H1 (cell line): ENCODE measurements at regions of chr10 and their contacts with region 1.

Region 1: GRCh38 chr10:31770307-31770902 is 158.2 kb downstream of the ARHGAP12 start:
- DNase-seq: no peak
- H3K4me3 ChIP-seq: no peak overlapping the region
- H3K27ac ChIP-seq: no peak overlapping the region
- H3K4me1 ChIP-seq: peaks cover 3 to 8% (median 4%) of the 10 kb centered on the region in 4 experiments; a peak in 5 of 7 replicates
- H3K27me3 ChIP-seq: no peaks in the 10 kb centered on the region; a peak in 1 of 7 replicates
- CTCF ChIP-seq: peak; percentile 56 to 88 (median 66)
- EP300 ChIP-seq: no peak
- POLR2A ChIP-seq: no peak
- RAD21 ChIP-seq: peak; percentile 72 to 80

Region 2: GRCh38 chr10:31739711-31740110 is 30.7 kb before region 1 on chr10:
- CTCF ChIA-PET with region 1: interaction called, 18 read pairs
- POLR2A ChIA-PET with region 1: no interaction called
- DNase-seq: no peak
- H3K4me3 ChIP-seq: no peak overlapping the region
- H3K27ac ChIP-seq: no peak overlapping the region
- H3K4me1 ChIP-seq: no peaks in the 10 kb centered on the region
- H3K27me3 ChIP-seq: no peaks in the 10 kb centered on the region
- CTCF ChIP-seq: no peak
- EP300 ChIP-seq: no peak
- POLR2A ChIP-seq: no peak
- RAD21 ChIP-seq: no peak

Region 3: DNA sequence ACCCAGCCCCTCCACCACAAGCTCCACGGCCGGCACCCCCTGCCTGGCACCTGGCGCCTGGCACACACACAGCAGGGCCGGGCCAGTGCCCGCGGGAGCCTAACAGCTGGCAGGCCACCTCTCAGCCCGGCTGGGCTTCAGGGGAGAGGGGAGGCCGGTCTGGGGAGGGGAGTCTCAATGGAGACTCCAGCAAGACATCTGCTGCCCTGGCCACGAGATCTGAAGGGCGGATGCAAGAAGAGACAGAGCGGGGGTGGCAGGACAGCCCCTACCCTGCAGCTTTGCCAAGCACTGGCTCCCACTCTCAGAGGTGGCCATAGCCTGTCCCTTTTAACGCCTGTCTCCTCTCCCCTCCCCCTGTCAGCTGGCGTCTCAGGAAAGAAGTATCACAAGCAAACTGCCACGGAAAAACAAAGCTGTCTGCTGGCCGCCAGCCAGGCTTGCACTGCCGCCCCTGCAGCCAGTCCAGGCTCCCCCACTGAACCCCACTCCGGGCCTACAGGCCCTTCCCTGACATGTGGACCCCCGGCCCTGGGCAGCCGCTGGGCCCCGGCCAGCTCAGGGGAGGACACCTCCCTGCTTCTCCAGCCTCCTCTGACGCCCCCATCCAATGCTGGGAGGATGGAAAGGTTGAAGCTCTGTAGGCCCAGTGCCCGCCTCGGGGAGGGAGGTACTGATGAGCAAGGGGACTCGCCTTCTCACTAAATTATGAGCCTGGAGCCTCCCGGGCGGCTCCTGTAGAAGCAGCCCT is 20.2 kb before region 1 on chr10:
- CTCF ChIA-PET with region 1: interaction called, 18 read pairs
- POLR2A ChIA-PET with region 1: interaction called, 3 read pairs
- DNase-seq: no peak
- H3K4me3 ChIP-seq: no peak overlapping the region
- H3K27ac ChIP-seq: no peak overlapping the region
- H3K4me1 ChIP-seq: peaks cover 4 to 8% (median 7%) of the 10 kb centered on the region in 4 experiments
- H3K27me3 ChIP-seq: no peaks in the 10 kb centered on the region
- CTCF ChIP-seq: no peak
- EP300 ChIP-seq: no peak
- POLR2A ChIP-seq: no peak
- RAD21 ChIP-seq: no peak

Region 4: DNA sequence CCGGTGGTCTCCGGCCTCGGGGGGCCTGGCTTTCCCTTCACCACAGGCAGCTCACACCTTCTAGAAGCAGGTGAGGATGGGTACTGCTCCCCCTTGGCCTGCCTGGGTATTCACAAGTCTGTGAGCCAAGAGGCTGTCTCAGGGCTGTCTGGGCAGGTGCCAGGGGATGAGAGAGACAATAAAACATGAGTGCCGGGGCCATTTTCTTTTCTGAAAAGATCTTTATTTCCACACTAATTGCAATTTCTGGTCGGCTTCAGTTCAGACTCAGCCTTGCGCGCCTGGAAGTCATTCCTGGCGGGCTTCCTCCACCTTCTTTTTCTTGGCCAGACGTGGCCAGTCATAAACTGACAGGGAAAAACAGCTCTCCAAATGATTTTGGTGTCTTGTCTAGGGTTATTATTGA is 13.0 kb before region 1 on chr10:
- CTCF ChIA-PET with region 1: interaction called, 18 read pairs
- POLR2A ChIA-PET with region 1: interaction called, 6 read pairs
- DNase-seq: no peak
- H3K4me3 ChIP-seq: no peak overlapping the region
- H3K27ac ChIP-seq: 0 out of 2 replicates have a peak overlapping the region, but pooled peaks have one; percentile 14
- H3K4me1 ChIP-seq: peaks cover 20 to 42% (median 34%) of the 10 kb centered on the region in 4 experiments
- H3K27me3 ChIP-seq: no peaks in the 10 kb centered on the region
- CTCF ChIP-seq: no peak
- EP300 ChIP-seq: no peak
- POLR2A ChIP-seq: no peak
- RAD21 ChIP-seq: no peak

Region 5: DNA sequence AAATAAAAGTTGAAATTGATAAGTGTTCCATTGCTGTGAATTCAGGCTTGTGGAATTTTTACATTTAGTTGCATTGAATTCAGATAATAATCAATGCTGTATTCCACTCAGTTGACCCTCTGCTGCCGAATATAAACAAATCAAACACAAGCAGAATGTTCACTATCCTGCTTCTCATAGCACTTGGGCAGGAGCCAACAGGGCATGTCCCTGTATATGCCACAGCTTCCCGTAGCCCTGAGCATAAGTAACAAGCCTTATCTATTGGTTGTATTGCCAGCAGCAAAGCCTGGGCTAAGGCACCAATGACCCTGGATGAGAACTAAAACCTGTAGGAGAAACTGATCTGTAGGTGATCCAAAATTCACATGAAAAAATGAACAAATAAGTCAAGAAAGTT is 12.3 kb after region 1 on chr10:
- CTCF ChIA-PET with region 1: interaction called, 10 read pairs
- POLR2A ChIA-PET with region 1: no interaction called
- DNase-seq: no peak
- H3K4me3 ChIP-seq: no peak overlapping the region
- H3K27ac ChIP-seq: no peak overlapping the region
- H3K4me1 ChIP-seq: no peaks in the 10 kb centered on the region
- H3K27me3 ChIP-seq: no peaks in the 10 kb centered on the region
- CTCF ChIP-seq: no peak
- EP300 ChIP-seq: no peak
- POLR2A ChIP-seq: no peak
- RAD21 ChIP-seq: no peak

Region 6: DNA sequence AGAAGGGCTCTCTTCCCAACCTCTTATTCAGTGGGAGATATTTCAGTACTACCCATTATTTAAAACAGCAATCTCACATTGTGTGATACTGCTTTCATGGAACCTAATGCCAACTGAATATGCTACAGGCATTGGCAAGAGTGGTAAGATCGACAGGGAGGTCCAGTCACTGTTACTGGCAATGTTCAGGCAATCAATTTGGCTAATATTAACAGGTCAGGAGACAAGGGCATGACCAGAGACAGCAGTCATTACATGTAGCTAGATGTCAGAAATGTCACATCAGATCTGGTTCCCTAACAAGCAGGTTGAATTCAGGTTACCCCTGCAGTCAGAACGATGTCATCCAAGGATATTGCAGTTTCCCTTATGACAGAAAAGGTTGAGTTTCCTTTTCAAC is 28.8 kb after region 1 on chr10:
- CTCF ChIA-PET with region 1: no interaction called
- POLR2A ChIA-PET with region 1: no interaction called
- DNase-seq: no peak
- H3K4me3 ChIP-seq: no peak overlapping the region
- H3K27ac ChIP-seq: no peak overlapping the region
- H3K4me1 ChIP-seq: no peaks in the 10 kb centered on the region
- H3K27me3 ChIP-seq: no peaks in the 10 kb centered on the region
- CTCF ChIP-seq: no peak
- EP300 ChIP-seq: no peak
- POLR2A ChIP-seq: no peak
- RAD21 ChIP-seq: no peak